Heart right ventricle (tissue), 16 donors: ENCODE measurements at regions of chr13 and their contacts with region 1.

Region 1: GRCh38 chr13:40666045-40666904 is at the start of gene FOXO1:
- DNase-seq: peak; percentile 91 to 93
- ATAC-seq: peak; percentile 81 to 88 (median 87)
- H3K4me3 ChIP-seq: peak within 1 kb of the TSS; percentile 81 to 97 (median 92)
- H3K27ac ChIP-seq: peak within 1 kb of the TSS; percentile 95 to 99 (median 98)
- H3K4me1 ChIP-seq: peaks cover 0 to 46% (median 41%) of the 10 kb centered on the region in 9 donors
- H3K27me3 ChIP-seq: no peaks in the 10 kb centered on the region
- CTCF ChIP-seq: peak in 1 of 9 donors; percentile 8
- total RNA-seq, gene FOXO1: 12.3 to 31.2 (median 17.3) TPM

Region 2: GRCh38 chr13:40190641-40191100 is 475.6 kb before region 1 on chr13:
- intact Hi-C with region 1: loop called in 2 of 10 experiments (anchors 5 to 10 kb)
- DNase-seq: no peak
- ATAC-seq: peak; percentile 42 to 64 (median 56)
- H3K4me3 ChIP-seq: no peak overlapping the region
- H3K27ac ChIP-seq: peak overlapping the region; percentile 32 to 89 (median 78)
- H3K4me1 ChIP-seq: peaks cover 20 to 55% (median 42%) of the 10 kb centered on the region in 9 donors
- H3K27me3 ChIP-seq: no peaks in the 10 kb centered on the region
- CTCF ChIP-seq: no peak

Region 3: GRCh38 chr13:40318366-40318765 is 347.9 kb before region 1 on chr13:
- intact Hi-C with region 1: loop called in 1 of 10 experiments (anchors 10 kb)
- DNase-seq: peak; percentile 41 to 61
- ATAC-seq: peak in 5 of 8 donors; percentile 22 to 70 (median 36)
- H3K4me3 ChIP-seq: no peak overlapping the region
- H3K27ac ChIP-seq: no peak overlapping the region
- H3K4me1 ChIP-seq: peaks cover 0 to 31% (median 19%) of the 10 kb centered on the region in 9 donors
- H3K27me3 ChIP-seq: peaks cover 0 to 2% (median 0%) of the 10 kb centered on the region in 7 donors
- CTCF ChIP-seq: no peak

Region 4: GRCh38 chr13:40340368-40341095 is 325.7 kb before region 1 on chr13:
- intact Hi-C with region 1: no loop called
- DNase-seq: no peak
- ATAC-seq: no peak
- H3K4me3 ChIP-seq: no peak overlapping the region
- H3K27ac ChIP-seq: no peak overlapping the region
- H3K4me1 ChIP-seq: peaks cover 0 to 34% (median 22%) of the 10 kb centered on the region in 9 donors
- H3K27me3 ChIP-seq: no peaks in the 10 kb centered on the region
- CTCF ChIP-seq: no peak

Region 5: GRCh38 chr13:40422588-40423235 is 243.6 kb before region 1 on chr13:
- intact Hi-C with region 1: no loop called
- DNase-seq: no peak
- ATAC-seq: no peak
- H3K4me3 ChIP-seq: no peak overlapping the region
- H3K27ac ChIP-seq: no peak overlapping the region
- H3K4me1 ChIP-seq: peaks cover 0 to 7% (median 0%) of the 10 kb centered on the region in 9 donors
- H3K27me3 ChIP-seq: no peaks in the 10 kb centered on the region
- CTCF ChIP-seq: no peak

Region 6: DNA sequence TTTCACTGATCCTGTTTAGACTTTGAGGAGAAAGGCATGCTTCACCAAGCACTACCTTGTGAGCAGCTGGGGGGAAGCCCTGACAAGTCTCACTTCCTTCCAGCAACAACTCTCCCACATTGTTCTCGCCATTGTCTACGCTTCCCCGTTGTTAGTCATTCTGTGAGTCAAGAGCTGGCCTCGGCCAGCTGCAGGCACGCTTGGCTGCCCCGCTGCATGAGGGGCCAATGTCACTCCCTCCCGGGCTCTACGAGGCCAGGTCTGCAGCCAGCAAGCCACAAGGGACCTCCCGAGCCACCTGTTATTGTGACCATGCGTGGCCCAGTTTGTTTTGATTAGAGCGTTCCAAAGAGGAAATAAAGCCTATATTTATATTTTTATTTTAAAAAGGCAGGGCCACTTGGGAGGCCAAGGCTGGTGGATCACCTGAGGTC is 220.7 kb before region 1 on chr13:
- intact Hi-C with region 1: loop called in 3 of 10 experiments (anchors 5 to 10 kb)
- DNase-seq: peak; percentile 56 to 72
- ATAC-seq: peak; percentile 71 to 91 (median 84)
- H3K4me3 ChIP-seq: no peak overlapping the region
- H3K27ac ChIP-seq: peak overlapping the region in 6 of 10 donors; percentile 13 to 70 (median 58)
- H3K4me1 ChIP-seq: peaks cover 7 to 58% (median 43%) of the 10 kb centered on the region in 9 donors
- H3K27me3 ChIP-seq: no peaks in the 10 kb centered on the region
- CTCF ChIP-seq: no peak

Region 7: GRCh38 chr13:40485611-40486517 is 180.4 kb before region 1 on chr13:
- intact Hi-C with region 1: loop called in 3 of 10 experiments (anchors 10 kb)
- DNase-seq: no peak
- ATAC-seq: peak in 1 of 8 donors; percentile 13
- H3K4me3 ChIP-seq: no peak overlapping the region
- H3K27ac ChIP-seq: peak overlapping the region in 1 of 10 donors; percentile 72
- H3K4me1 ChIP-seq: peaks cover 0 to 18% (median 6%) of the 10 kb centered on the region in 9 donors
- H3K27me3 ChIP-seq: no peaks in the 10 kb centered on the region
- CTCF ChIP-seq: no peak

Region 8: DNA sequence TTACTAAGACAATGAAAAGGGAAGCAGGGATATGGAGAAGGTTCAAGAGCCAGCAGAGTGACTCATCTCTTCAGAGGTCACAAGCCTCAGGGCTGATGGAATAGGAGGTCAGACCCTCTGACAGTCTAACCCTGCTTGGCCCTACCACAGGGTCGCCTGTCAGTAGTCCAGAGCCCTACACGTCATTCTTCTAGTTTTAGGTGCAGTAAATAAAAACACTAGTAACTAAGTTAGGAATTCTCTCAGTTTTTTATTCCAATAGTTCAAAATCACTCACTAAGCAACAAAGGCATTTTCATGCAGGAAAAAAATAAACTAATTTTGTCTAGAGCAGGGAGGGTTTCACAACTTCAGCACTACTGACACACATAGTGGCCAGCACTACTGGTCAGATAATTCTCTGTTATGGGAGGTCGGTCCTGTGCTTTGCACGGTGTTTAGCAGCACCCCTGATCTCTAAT is 27.0 kb before region 1 on chr13:
- intact Hi-C with region 1: loop called in 1 of 10 experiments (anchors 2 kb)
- DNase-seq: peak in 1 of 2 donors; percentile 30
- ATAC-seq: peak; percentile 65 to 89 (median 75)
- H3K4me3 ChIP-seq: no peak overlapping the region
- H3K27ac ChIP-seq: peak overlapping the region in 7 of 10 donors; percentile 26 to 70 (median 54)
- H3K4me1 ChIP-seq: peaks cover 15 to 84% (median 66%) of the 10 kb centered on the region in 9 donors
- H3K27me3 ChIP-seq: no peaks in the 10 kb centered on the region
- CTCF ChIP-seq: no peak